A673 (cell line): ENCODE measurements at regions of chr6 and their contacts with region 1.

Region 1: DNA sequence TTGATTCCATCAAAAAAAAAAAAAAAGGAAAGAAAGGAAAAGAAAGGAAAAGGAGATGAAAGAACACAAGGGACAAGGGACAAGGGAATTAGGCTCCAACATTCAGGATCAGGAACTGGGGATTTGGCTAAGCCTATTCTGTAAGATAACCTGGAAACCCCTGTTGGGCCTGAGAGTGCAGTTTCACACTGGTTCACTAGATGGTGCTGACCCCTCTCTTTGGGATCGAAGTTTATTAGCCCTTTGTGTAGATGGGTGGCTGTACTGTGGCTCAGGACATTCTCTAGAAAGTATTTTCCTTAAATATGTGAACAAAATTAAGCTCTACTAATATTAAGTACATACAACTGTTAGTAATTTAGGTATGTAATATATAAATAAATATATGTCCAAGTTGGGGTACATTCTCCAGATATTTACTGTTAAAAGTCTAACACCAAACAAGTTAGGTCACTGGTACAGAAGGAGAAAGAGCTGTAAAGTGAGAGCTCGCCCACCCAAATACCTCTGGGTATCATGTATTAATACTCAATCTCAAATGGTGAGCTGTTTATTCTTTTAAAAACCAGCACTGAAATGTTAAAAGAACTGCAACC is 6.3 kb downstream of the OR2A4 start:
- DNase-seq: peak; percentile 84
- H3K4me3 ChIP-seq: no peak overlapping the region
- H3K27ac ChIP-seq: no peak overlapping the region
- H3K4me1 ChIP-seq: no peaks in the 10 kb centered on the region
- H3K27me3 ChIP-seq: no peaks in the 10 kb centered on the region
- CTCF ChIP-seq: peak; percentile 82

Region 2: DNA sequence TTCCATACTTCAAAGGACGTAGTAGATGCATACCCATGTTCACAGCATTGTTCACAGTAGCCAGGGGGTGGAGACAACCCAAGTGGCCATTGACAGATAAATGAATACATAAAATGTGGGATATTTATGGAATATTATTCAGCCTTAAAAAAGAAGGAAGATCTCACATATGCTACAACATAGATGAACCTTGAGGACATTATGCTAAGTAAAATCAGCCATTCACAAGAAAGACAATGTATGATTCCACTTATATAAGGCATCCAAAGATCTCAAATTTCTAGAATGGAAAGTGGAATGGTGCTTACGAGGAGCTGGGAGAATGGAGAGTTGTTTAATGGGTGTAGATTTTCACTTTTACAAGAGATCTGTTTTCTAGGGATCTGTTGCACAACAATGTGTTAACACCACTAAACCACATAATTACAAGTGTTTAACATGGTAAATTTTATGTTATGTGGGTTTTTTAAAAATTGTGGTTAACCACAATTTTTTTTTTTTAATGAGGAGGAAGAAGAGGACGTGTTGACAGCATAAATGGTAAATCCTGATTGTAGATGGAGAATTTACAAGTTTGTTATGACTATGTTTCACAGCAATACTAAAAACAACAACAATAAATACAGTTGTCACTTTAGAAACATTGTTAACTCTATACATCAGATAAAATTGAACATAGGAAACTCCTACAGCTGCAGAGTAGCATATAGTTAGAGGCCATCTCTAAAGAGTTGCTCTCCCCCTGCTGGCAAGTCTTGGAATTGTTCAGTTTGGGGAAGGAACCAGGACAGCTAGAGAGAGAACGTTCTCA is 214.7 kb after region 1 on chr6:
- CTCF ChIA-PET with region 1: interaction called, 16 read pairs
- POLR2A ChIA-PET with region 1: no interaction called
- intact Hi-C with region 1: loop called (anchors 1 kb)
- DNase-seq: peak; percentile 91
- H3K4me3 ChIP-seq: no peak overlapping the region
- H3K27ac ChIP-seq: no peak overlapping the region
- H3K4me1 ChIP-seq: peaks cover 15% of the 10 kb centered on the region
- H3K27me3 ChIP-seq: no peaks in the 10 kb centered on the region
- CTCF ChIP-seq: peak; percentile 88